ENCODE measurements at regions of chr9 and their contacts with region 1.

Region 1: GRCh38 chr9:35646533-35647265 is 4.0 kb downstream of the SIT1 start:
- DNase-seq: peak; percentile 91 to 95 (median 91)
- H3K4me3 ChIP-seq: peak overlapping the region; percentile 78 to 96
- H3K4me3 Mint-ChIP-seq: peak overlapping the region; percentile 93 to 98 (median 94)
- H3K27ac ChIP-seq: peak overlapping the region; percentile 88
- H3K27ac Mint-ChIP-seq: peak overlapping the region; percentile 89 to 99 (median 97)
- H3K4me1 ChIP-seq: peaks cover 56% of the 10 kb centered on the region
- H3K4me1 Mint-ChIP-seq: peaks cover 29 to 87% (median 47%) of the 10 kb centered on the region in 4 donors
- H3K27me3 ChIP-seq: no peaks in the 10 kb centered on the region
- H3K27me3 Mint-ChIP-seq: no peaks in the 10 kb centered on the region

Region 2: DNA sequence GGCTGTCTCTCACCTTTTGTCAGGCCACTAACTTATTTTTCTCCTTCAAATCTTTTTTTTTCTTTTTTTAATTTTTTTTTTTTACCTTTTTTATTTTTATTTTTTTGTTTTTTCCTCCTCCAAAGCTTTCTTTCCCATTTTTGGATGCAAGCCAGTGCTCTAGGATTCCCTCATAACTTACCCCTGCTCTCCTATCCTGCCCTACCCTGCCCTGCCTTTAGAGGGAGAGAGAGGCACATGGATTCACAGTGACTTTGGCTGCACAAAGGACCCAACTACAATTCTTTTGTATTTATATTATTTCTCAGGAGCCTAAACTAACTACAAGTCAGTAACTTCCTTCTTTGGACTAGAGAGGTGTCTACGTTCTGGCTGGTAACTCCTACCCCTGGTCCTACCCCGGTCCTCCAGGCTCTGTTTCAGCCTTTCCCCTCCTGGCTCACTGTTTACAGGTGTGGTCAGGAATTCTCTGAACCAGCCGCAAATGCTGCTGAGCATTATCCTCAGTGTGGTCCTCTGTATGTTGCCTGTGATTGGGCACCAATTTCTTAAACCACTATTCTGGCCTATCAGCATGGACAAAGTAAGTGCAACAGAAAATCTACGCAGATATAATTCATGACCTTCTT is 165.2 kb before region 1 on chr9:
- CTCF ChIA-PET with region 1: no interaction called
- POLR2A ChIA-PET with region 1: no interaction called
- intact Hi-C with region 1: no loop called
- DNase-seq: peak in 2 of 5 donors; percentile 17 to 23
- H3K4me3 ChIP-seq: no peak overlapping the region
- H3K4me3 Mint-ChIP-seq: no peak overlapping the region
- H3K27ac ChIP-seq: no peak overlapping the region
- H3K27ac Mint-ChIP-seq: no peak overlapping the region
- H3K4me1 ChIP-seq: no peaks in the 10 kb centered on the region
- H3K4me1 Mint-ChIP-seq: no peaks in the 10 kb centered on the region
- H3K27me3 ChIP-seq: no peaks in the 10 kb centered on the region
- H3K27me3 Mint-ChIP-seq: peaks cover 7 to 10% of the 10 kb centered on the region in 2 donors

Region 3: GRCh38 chr9:35603987-35604577 is 42.6 kb before region 1 on chr9:
- CTCF ChIA-PET with region 1: interaction called, 26 read pairs
- POLR2A ChIA-PET with region 1: interaction called, 56 read pairs
- intact Hi-C with region 1: loop called (anchors 1 kb)
- DNase-seq: peak; percentile 98 to 99 (median 99)
- H3K4me3 ChIP-seq: peak overlapping the region; percentile 75 to 84
- H3K4me3 Mint-ChIP-seq: peak overlapping the region; percentile 95 to 100 (median 98)
- H3K27ac ChIP-seq: peak overlapping the region; percentile 85
- H3K27ac Mint-ChIP-seq: peak overlapping the region; percentile 96 to 100 (median 99)
- H3K4me1 ChIP-seq: peaks cover 37% of the 10 kb centered on the region
- H3K4me1 Mint-ChIP-seq: peaks cover 25 to 47% (median 32%) of the 10 kb centered on the region in 4 donors
- H3K27me3 ChIP-seq: no peaks in the 10 kb centered on the region
- H3K27me3 Mint-ChIP-seq: no peaks in the 10 kb centered on the region

Region 4: GRCh38 chr9:35616681-35617459 is 29.8 kb before region 1 on chr9:
- CTCF ChIA-PET with region 1: interaction called, 76 read pairs
- POLR2A ChIA-PET with region 1: interaction called, 148 read pairs
- intact Hi-C with region 1: no loop called
- DNase-seq: peak; percentile 63 to 75 (median 64)
- H3K4me3 ChIP-seq: peak overlapping the region; percentile 63 to 64
- H3K4me3 Mint-ChIP-seq: peak overlapping the region; percentile 84 to 91 (median 88)
- H3K27ac ChIP-seq: peak overlapping the region; percentile 60
- H3K27ac Mint-ChIP-seq: peak overlapping the region; percentile 89 to 95 (median 93)
- H3K4me1 ChIP-seq: peaks cover 36% of the 10 kb centered on the region
- H3K4me1 Mint-ChIP-seq: peaks cover 26 to 58% (median 35%) of the 10 kb centered on the region in 4 donors
- H3K27me3 ChIP-seq: no peaks in the 10 kb centered on the region
- H3K27me3 Mint-ChIP-seq: no peaks in the 10 kb centered on the region

Region 5: GRCh38 chr9:35664531-35665470 is 18.1 kb after region 1 on chr9 and contains the start of gene ARHGEF39:
- CTCF ChIA-PET with region 1: interaction called, 260 read pairs
- POLR2A ChIA-PET with region 1: interaction called, 420 read pairs
- intact Hi-C with region 1: loop called (anchors 2 kb)
- DNase-seq: peak; percentile 64 to 72 (median 67)
- H3K4me3 ChIP-seq: peak within 1 kb of the TSS; percentile 42 to 51
- H3K4me3 Mint-ChIP-seq: peak within 1 kb of the TSS; percentile 83 to 91 (median 88)
- H3K27ac ChIP-seq: peak within 1 kb of the TSS; percentile 96
- H3K27ac Mint-ChIP-seq: peak within 1 kb of the TSS; percentile 82 to 100 (median 97)
- H3K4me1 ChIP-seq: peaks cover 56% of the 10 kb centered on the region
- H3K4me1 Mint-ChIP-seq: peaks cover 44 to 68% (median 56%) of the 10 kb centered on the region in 4 donors
- H3K27me3 ChIP-seq: no peaks in the 10 kb centered on the region
- H3K27me3 Mint-ChIP-seq: no peaks in the 10 kb centered on the region
- total RNA-seq, gene ARHGEF39: not detected

Region 6: GRCh38 chr9:35756275-35757225 is 109.9 kb after region 1 on chr9:
- CTCF ChIA-PET with region 1: interaction called, 4 read pairs
- POLR2A ChIA-PET with region 1: interaction called, 15 read pairs
- intact Hi-C with region 1: no loop called
- DNase-seq: peak; percentile 68 to 80 (median 71)
- H3K4me3 ChIP-seq: peak overlapping the region; percentile 62 to 90
- H3K4me3 Mint-ChIP-seq: peak overlapping the region; percentile 97 to 100 (median 98)
- H3K27ac ChIP-seq: peak overlapping the region; percentile 70
- H3K27ac Mint-ChIP-seq: peak overlapping the region; percentile 81 to 99 (median 98)
- H3K4me1 ChIP-seq: peaks cover 22% of the 10 kb centered on the region
- H3K4me1 Mint-ChIP-seq: peaks cover 24 to 67% (median 49%) of the 10 kb centered on the region in 4 donors
- H3K27me3 ChIP-seq: no peaks in the 10 kb centered on the region
- H3K27me3 Mint-ChIP-seq: no peaks in the 10 kb centered on the region